Heart left ventricle (tissue), 16 donors: ENCODE measurements at regions of chr1 and their contacts with region 1.

Region 1: DNA sequence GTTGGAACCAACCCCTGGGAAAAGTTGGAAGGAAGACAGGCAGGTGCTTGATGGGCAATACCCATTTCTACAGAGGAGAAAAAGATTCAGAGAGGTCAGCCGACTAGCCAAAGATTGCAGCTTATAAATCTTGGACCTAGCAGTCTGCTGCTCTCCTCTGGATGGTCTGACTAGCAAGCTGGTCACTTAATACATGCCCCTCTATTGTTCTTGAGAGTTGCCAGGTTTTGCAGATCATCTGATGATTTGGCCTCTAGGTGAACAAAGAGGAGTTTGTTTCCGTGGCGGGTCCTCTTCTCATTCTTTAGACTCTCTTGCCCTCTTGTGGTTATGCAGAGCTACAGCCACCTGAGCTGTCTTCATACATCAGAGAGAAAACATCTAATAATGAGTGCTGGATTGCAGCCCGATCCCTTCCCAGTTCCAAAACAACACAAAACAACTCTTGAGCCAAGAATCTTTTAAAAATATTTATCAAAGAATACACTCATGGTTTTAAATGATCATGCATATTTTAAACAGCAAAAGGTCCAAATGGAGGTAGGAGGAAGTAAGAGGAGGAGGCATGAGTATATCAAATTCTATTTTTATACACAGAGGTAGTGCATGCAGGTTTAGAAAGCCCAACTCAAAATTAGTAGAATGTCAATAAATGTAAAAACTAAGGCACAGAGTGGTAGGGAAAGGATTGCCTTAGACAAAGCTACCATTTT is 115.7 kb downstream of the SLC30A10 start:
- DNase-seq: peak in 2 of 5 donors; percentile 22 to 40
- ATAC-seq: peak in 3 of 4 donors; percentile 78 to 92 (median 82)
- H3K4me3 ChIP-seq: no peak overlapping the region
- H3K27ac ChIP-seq: no peak overlapping the region
- H3K4me1 ChIP-seq: peaks cover 0 to 9% (median 0%) of the 10 kb centered on the region in 12 donors
- H3K27me3 ChIP-seq: peaks cover 0 to 3% (median 0%) of the 10 kb centered on the region in 9 donors
- CTCF ChIP-seq: peak; percentile 57 to 85 (median 82)
- POLR2A ChIP-seq: no peak

Region 2: GRCh38 chr1:218323568-218324225 is 1489.0 kb before region 1 on chr1:
- intact Hi-C with region 1: loop called in 5 of 10 experiments (anchors 2 to 10 kb)
- DNase-seq: peak in 1 of 5 donors; percentile 59
- ATAC-seq: peak in 2 of 4 donors; percentile 11 to 49
- H3K4me3 ChIP-seq: no peak overlapping the region
- H3K27ac ChIP-seq: no peak overlapping the region
- H3K4me1 ChIP-seq: no peaks in the 10 kb centered on the region
- H3K27me3 ChIP-seq: no peaks in the 10 kb centered on the region
- CTCF ChIP-seq: no peak
- POLR2A ChIP-seq: no peak

Region 3: DNA sequence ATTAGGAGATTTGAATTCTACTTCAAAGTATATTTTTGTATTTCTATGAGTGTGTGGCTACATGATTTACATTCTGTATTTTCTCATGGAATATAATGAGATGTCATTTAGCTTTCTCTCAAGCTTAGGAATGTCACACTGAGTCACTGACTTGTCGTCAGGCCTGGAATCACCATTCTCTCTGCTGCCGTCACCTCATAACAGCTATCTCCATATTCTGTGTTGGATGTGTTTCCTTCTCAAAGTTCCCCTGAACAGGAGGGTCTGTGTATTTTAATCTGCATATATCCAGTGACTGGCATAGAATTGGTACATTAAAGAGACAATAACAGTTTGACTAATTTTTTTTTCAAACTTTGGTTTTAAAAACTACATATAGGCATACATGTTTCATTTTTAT is 603.1 kb before region 1 on chr1:
- intact Hi-C with region 1: loop called in 2 of 10 experiments (anchors 10 kb)
- DNase-seq: no peak
- ATAC-seq: peak in 3 of 4 donors; percentile 68 to 81 (median 80)
- H3K4me3 ChIP-seq: no peak overlapping the region
- H3K27ac ChIP-seq: peak overlapping the region in 1 of 12 donors; percentile 25
- H3K4me1 ChIP-seq: peaks cover 0 to under 1% (median 0%) of the 10 kb centered on the region in 12 donors
- H3K27me3 ChIP-seq: no peaks in the 10 kb centered on the region
- CTCF ChIP-seq: no peak
- POLR2A ChIP-seq: no peak

Region 4: GRCh38 chr1:219566951-219567947 is 245.4 kb before region 1 on chr1:
- intact Hi-C with region 1: loop called in 7 of 10 experiments (anchors 5 to 10 kb)
- DNase-seq: no peak
- ATAC-seq: peak; percentile 67 to 75 (median 72)
- H3K4me3 ChIP-seq: no peak overlapping the region
- H3K27ac ChIP-seq: no peak overlapping the region
- H3K4me1 ChIP-seq: peaks cover 0 to 9% (median 1%) of the 10 kb centered on the region in 12 donors
- H3K27me3 ChIP-seq: peaks cover 0 to 3% (median 0%) of the 10 kb centered on the region in 9 donors
- CTCF ChIP-seq: peak; percentile 36 to 71 (median 54)
- POLR2A ChIP-seq: no peak

Region 5: GRCh38 chr1:219660666-219661463 is 151.8 kb before region 1 on chr1:
- intact Hi-C with region 1: loop called in 8 of 10 experiments (anchors 5 to 10 kb)
- DNase-seq: peak; percentile 87 to 95 (median 89)
- ATAC-seq: peak; percentile 70 to 91 (median 88)
- H3K4me3 ChIP-seq: peak overlapping the region in 8 of 12 donors; percentile 13 to 35 (median 28)
- H3K27ac ChIP-seq: peak overlapping the region in 3 of 12 donors; percentile 3 to 8 (median 6)
- H3K4me1 ChIP-seq: peaks cover 0 to 31% (median 13%) of the 10 kb centered on the region in 12 donors
- H3K27me3 ChIP-seq: peaks cover 0 to 2% (median 0%) of the 10 kb centered on the region in 9 donors
- CTCF ChIP-seq: peak; percentile 68 to 90 (median 79)
- POLR2A ChIP-seq: no peak

Region 6: DNA sequence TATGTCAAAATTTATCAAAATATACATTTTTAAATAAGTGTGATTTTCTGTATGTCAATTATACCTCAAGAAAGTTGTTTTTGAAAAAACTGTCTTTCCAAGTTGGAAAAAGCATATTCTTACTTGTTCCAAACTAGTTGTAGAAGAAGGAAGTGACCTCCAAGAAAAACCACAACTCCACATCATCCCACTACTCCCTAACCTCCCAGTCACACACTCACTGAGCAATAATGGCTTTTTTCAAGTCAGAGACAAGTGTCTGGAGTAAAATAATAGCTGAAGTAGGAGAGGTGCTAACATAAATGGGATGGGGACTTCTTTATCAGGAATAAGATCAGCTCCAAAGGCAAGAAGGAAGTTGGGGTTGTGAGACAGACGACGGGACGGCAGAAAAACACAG is 220.3 kb after region 1 on chr1:
- intact Hi-C with region 1: no loop called
- DNase-seq: no peak
- ATAC-seq: no peak
- H3K4me3 ChIP-seq: no peak overlapping the region
- H3K27ac ChIP-seq: no peak overlapping the region
- H3K4me1 ChIP-seq: no peaks in the 10 kb centered on the region
- H3K27me3 ChIP-seq: no peaks in the 10 kb centered on the region
- CTCF ChIP-seq: no peak
- POLR2A ChIP-seq: no peak

Region 7: DNA sequence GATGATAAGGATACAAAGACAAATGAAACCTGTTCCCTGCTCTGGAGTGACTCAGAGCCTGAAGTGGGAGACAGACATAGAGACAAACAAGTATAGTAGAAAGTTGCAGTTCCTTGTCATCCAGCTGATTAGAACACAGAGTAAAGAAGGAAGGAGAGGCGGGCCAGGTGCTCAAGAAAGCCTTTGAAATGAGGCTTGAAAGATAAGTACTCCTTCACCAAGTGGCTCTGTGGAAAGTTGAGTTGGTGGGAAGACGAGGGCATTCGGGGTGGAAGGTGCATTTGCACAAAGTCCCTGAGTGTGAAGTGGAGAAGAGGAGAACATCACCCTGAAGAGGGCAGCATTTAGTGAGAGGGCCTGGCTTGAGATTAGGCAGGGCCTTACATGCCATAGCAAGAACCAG is 732.3 kb after region 1 on chr1:
- intact Hi-C with region 1: no loop called
- DNase-seq: no peak
- ATAC-seq: no peak
- H3K4me3 ChIP-seq: no peak overlapping the region
- H3K27ac ChIP-seq: no peak overlapping the region
- H3K4me1 ChIP-seq: no peaks in the 10 kb centered on the region
- H3K27me3 ChIP-seq: no peaks in the 10 kb centered on the region
- CTCF ChIP-seq: no peak
- POLR2A ChIP-seq: no peak